B cell (primary cell): ENCODE measurements at regions of chr2 and their contacts with region 1.

Region 1: DNA sequence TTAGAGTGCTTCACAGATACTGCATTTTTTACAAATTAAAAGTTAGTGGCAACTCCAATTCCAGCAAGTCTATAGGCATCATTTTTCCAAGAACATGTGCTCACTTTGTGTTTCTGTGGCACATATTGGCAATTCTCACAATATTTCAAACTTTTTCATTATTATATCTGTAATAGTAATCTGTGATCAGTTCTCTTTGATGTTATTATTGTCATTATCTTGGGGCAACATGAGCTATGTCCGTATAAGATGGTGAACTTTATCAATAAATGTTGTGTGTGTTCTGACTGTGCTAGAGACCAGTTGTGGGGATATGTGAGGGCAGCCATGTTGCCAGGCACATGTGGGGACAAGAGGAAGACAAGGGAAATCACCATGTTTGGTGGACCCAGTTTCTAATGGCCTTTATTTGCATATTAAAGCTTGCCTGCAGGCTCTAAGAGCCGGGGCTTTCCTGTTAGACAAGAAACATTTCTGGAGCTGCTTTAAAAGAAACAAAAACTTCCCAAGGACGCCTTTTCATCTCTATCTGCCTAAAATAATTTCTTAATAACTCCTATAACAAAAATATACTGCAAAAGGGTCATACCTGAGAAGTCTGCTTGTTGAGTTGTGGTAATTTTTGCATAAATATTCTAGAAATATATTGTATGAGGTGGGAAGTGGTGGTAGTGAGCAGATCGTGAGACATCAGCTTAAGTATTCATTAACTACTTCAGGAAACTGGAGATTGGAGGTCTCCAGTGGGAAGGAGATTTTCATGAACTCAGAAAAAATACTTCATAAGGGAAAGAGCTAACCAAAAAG is 37.2 kb downstream of the KYNU start:
- DNase-seq: peak; percentile 65
- ATAC-seq: peak; percentile 90
- H3K4me3 ChIP-seq: peak overlapping the region in 3 of 5 experiments; percentile 36 to 51 (median 40)
- H3K4me3 Mint-ChIP-seq: peak overlapping the region; percentile 70
- H3K27ac ChIP-seq: peak overlapping the region; percentile 55 to 84
- H3K27ac Mint-ChIP-seq: peak overlapping the region; percentile 84
- H3K4me1 ChIP-seq: peaks cover 22 to 26% of the 10 kb centered on the region in 2 donors
- H3K4me1 Mint-ChIP-seq: peaks cover 55% of the 10 kb centered on the region
- H3K27me3 ChIP-seq: no peaks in the 10 kb centered on the region
- H3K27me3 Mint-ChIP-seq: no peaks in the 10 kb centered on the region
- CTCF ChIP-seq: no peak

Region 2: GRCh38 chr2:142803158-142803557 is 111.6 kb before region 1 on chr2:
- CTCF ChIA-PET with region 1: no interaction called
- POLR2A ChIA-PET with region 1: no interaction called
- intact Hi-C with region 1: no loop called
- DNase-seq: no peak
- ATAC-seq: no peak
- H3K4me3 ChIP-seq: no peak overlapping the region
- H3K4me3 Mint-ChIP-seq: no peak overlapping the region
- H3K27ac ChIP-seq: no peak overlapping the region
- H3K27ac Mint-ChIP-seq: no peak overlapping the region
- H3K4me1 ChIP-seq: no peaks in the 10 kb centered on the region
- H3K4me1 Mint-ChIP-seq: no peaks in the 10 kb centered on the region
- H3K27me3 ChIP-seq: no peaks in the 10 kb centered on the region
- H3K27me3 Mint-ChIP-seq: no peaks in the 10 kb centered on the region
- CTCF ChIP-seq: no peak

Region 3: DNA sequence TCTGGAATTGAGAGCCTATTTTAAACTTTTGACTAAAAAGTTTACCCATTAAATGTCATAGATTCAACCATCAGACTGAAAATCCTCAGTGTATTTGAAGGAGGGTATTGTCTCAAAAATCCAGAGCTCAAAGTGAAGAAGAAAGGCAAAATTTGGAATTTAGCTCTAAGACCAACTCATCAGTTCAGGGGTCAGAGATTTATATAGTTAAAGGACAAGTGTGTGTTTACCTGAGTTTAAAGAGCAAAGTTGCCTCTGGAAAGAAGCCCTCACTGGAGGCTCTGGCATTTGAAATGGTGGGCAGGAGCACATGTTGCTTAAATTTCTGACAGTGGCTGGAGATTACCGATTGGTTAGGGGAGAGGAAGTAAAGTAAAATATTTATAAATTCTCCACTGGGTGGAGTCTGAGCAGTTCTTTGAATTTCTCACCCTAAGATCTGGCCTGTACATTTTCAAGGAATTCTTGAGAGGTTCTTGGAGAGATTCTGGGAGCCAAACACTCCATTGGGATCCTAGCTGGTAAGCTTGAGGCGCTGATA is 37.4 kb before region 1 on chr2 and contains the start of gene KYNU:
- CTCF ChIA-PET with region 1: interaction called, 3 read pairs
- POLR2A ChIA-PET with region 1: no interaction called
- intact Hi-C with region 1: loop called (anchors 5 kb)
- DNase-seq: peak; percentile 70
- ATAC-seq: peak; percentile 77
- H3K4me3 ChIP-seq: peak within 1 kb of the TSS; percentile 53 to 80 (median 61)
- H3K4me3 Mint-ChIP-seq: peak within 1 kb of the TSS; percentile 91
- H3K27ac ChIP-seq: peak within 1 kb of the TSS; percentile 84 to 85
- H3K27ac Mint-ChIP-seq: peak within 1 kb of the TSS; percentile 91
- H3K4me1 ChIP-seq: peaks cover 49 to 55% of the 10 kb centered on the region in 2 donors
- H3K4me1 Mint-ChIP-seq: peaks cover 72% of the 10 kb centered on the region
- H3K27me3 ChIP-seq: no peaks in the 10 kb centered on the region
- H3K27me3 Mint-ChIP-seq: no peaks in the 10 kb centered on the region
- CTCF ChIP-seq: peak; percentile 49
- total RNA-seq, gene KYNU: 46.2 and 50.4 TPM in 2 replicates

Region 4: GRCh38 chr2:142892715-142893114 is 22.0 kb before region 1 on chr2:
- CTCF ChIA-PET with region 1: interaction called, 5 read pairs
- POLR2A ChIA-PET with region 1: no interaction called
- intact Hi-C with region 1: loop called (anchors 2 kb)
- DNase-seq: peak; percentile 62
- ATAC-seq: peak; percentile 79
- H3K4me3 ChIP-seq: no peak overlapping the region
- H3K4me3 Mint-ChIP-seq: peak overlapping the region; percentile 2
- H3K27ac ChIP-seq: peak overlapping the region; percentile 54 to 65
- H3K27ac Mint-ChIP-seq: peak overlapping the region; percentile 67
- H3K4me1 ChIP-seq: peaks cover 3 to 13% of the 10 kb centered on the region in 2 donors
- H3K4me1 Mint-ChIP-seq: peaks cover 55% of the 10 kb centered on the region
- H3K27me3 ChIP-seq: no peaks in the 10 kb centered on the region
- H3K27me3 Mint-ChIP-seq: no peaks in the 10 kb centered on the region
- CTCF ChIP-seq: no peak

Region 5: GRCh38 chr2:142957143-142957542 is 42.4 kb after region 1 on chr2:
- CTCF ChIA-PET with region 1: no interaction called
- POLR2A ChIA-PET with region 1: no interaction called
- intact Hi-C with region 1: loop called (anchors 5 kb)
- DNase-seq: no peak
- ATAC-seq: no peak
- H3K4me3 ChIP-seq: no peak overlapping the region
- H3K4me3 Mint-ChIP-seq: no peak overlapping the region
- H3K27ac ChIP-seq: no peak overlapping the region
- H3K27ac Mint-ChIP-seq: no peak overlapping the region
- H3K4me1 ChIP-seq: no peaks in the 10 kb centered on the region
- H3K4me1 Mint-ChIP-seq: peaks cover 3% of the 10 kb centered on the region
- H3K27me3 ChIP-seq: no peaks in the 10 kb centered on the region
- H3K27me3 Mint-ChIP-seq: no peaks in the 10 kb centered on the region
- CTCF ChIP-seq: no peak